ENCODE measurements at regions of chr6 and their contacts with region 1.

Region 1: DNA sequence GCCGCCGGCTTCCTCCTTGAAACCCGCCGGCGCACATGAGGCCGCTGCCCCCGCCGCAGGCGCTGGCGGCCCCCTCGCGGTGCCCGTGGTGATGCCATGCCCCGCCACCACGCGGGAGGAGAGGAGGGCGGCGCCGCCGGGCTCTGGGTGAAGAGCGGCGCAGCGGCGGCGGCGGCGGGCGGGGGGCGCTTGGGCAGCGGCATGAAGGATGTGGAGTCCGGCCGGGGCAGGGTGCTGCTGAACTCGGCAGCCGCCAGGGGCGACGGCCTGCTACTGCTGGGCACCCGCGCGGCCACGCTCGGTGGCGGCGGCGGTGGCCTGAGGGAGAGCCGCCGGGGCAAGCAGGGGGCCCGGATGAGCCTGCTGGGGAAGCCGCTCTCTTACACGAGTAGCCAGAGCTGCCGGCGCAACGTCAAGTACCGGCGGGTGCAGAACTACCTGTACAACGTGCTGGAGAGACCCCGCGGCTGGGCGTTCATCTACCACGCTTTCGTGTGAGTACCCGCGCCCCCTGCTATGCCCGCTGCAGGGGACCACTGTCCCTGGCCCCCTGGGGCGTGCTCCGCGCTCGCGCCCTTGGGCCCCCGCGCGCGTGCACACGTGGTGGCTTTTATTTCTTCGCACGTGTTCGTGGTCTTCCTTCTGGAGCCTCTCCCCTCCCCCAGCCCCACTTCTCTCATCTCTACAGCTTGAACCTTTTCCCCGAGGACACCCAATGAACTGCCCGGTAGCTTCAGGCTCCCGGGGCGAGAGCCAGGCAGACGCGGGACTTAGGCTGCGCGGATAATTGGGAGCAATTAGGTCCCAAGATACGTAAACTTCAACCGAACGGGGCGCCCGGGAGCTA is 453 bp downstream of the KCNQ5 start:
- DNase-seq: peak; percentile 72
- ATAC-seq: peak; percentile 54
- H3K4me3 Mint-ChIP-seq: peak overlapping the region; percentile 96
- H3K27ac Mint-ChIP-seq: peak overlapping the region; percentile 93
- H3K4me1 Mint-ChIP-seq: peaks cover 52% of the 10 kb centered on the region
- H3K27me3 Mint-ChIP-seq: no peaks in the 10 kb centered on the region
- CTCF ChIP-seq: no peak

Region 2: GRCh38 chr6:71288228-71289001 is 1333.9 kb before region 1 on chr6 and contains the start of gene OGFRL1:
- CTCF ChIA-PET with region 1: no interaction called
- POLR2A ChIA-PET with region 1: no interaction called
- intact Hi-C with region 1: loop called (anchors 2 kb)
- DNase-seq: peak; percentile 80
- ATAC-seq: peak; percentile 81
- H3K4me3 Mint-ChIP-seq: peak within 1 kb of the TSS; percentile 85
- H3K27ac Mint-ChIP-seq: peak within 1 kb of the TSS; percentile 93
- H3K4me1 Mint-ChIP-seq: peaks cover 49% of the 10 kb centered on the region
- H3K27me3 Mint-ChIP-seq: no peaks in the 10 kb centered on the region
- CTCF ChIP-seq: no peak
- total RNA-seq, gene OGFRL1: 17.1 and 18.4 TPM in 2 replicates

Region 3: DNA sequence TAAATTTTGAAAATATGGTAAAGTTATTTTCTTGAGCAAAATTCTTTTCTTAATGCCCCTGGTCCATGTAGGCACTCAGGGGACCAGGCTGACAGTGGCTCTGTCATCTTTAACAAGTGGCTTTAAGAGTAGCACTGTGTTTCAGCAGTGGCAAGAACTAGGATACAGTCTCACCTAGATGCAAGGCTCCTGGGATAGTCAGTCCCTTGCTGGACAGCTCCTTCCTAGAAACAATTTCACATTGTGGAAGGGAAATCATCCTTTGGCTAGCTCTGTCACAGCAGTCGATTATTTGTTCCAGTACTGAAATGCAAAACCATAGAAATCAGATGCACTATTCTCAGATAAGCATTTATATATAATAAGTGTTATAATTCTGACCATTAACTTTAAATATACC is 175.9 kb before region 1 on chr6:
- CTCF ChIA-PET with region 1: no interaction called
- POLR2A ChIA-PET with region 1: no interaction called
- intact Hi-C with region 1: no loop called
- DNase-seq: no peak
- ATAC-seq: no peak
- H3K4me3 Mint-ChIP-seq: no peak overlapping the region
- H3K27ac Mint-ChIP-seq: no peak overlapping the region
- H3K4me1 Mint-ChIP-seq: peaks cover 5% of the 10 kb centered on the region
- H3K27me3 Mint-ChIP-seq: peaks cover 22% of the 10 kb centered on the region
- CTCF ChIP-seq: no peak

Region 4: GRCh38 chr6:72665599-72665998 is 43.3 kb after region 1 on chr6:
- CTCF ChIA-PET with region 1: no interaction called
- POLR2A ChIA-PET with region 1: no interaction called
- intact Hi-C with region 1: no loop called
- DNase-seq: no peak
- ATAC-seq: no peak
- H3K4me3 Mint-ChIP-seq: no peak overlapping the region
- H3K27ac Mint-ChIP-seq: no peak overlapping the region
- H3K4me1 Mint-ChIP-seq: peaks cover 7% of the 10 kb centered on the region
- H3K27me3 Mint-ChIP-seq: no peaks in the 10 kb centered on the region
- CTCF ChIP-seq: no peak

Region 5: GRCh38 chr6:72740135-72740534 is 117.8 kb after region 1 on chr6:
- CTCF ChIA-PET with region 1: no interaction called
- POLR2A ChIA-PET with region 1: interaction called, 6 read pairs
- intact Hi-C with region 1: loop called (anchors 2 kb)
- DNase-seq: no peak
- ATAC-seq: peak; percentile 84
- H3K4me3 Mint-ChIP-seq: peak overlapping the region; percentile 11
- H3K27ac Mint-ChIP-seq: peak overlapping the region; percentile 37
- H3K4me1 Mint-ChIP-seq: peaks cover 34% of the 10 kb centered on the region
- H3K27me3 Mint-ChIP-seq: no peaks in the 10 kb centered on the region
- CTCF ChIP-seq: no peak

Region 6: DNA sequence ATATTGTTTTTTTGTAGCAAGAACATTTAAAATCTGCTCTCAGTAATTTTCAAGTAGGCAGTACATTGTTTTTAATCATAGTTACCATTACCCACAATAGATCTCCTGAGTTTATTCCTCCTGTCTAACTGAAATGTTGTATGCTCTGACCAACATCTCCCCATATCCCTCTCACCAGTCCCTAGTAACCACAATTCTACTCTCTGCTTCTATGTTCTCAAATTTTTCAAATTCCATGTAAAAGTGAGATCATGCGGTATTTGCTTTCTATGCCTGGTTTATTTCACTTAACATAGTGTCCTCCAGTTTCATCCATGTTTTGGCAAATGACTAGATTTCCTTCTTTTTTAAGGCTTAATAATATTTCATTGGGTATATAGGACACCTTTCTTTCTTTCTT is 300.1 kb after region 1 on chr6:
- CTCF ChIA-PET with region 1: no interaction called
- POLR2A ChIA-PET with region 1: no interaction called
- intact Hi-C with region 1: loop called (anchors 10 kb)
- DNase-seq: no peak
- ATAC-seq: no peak
- H3K4me3 Mint-ChIP-seq: no peak overlapping the region
- H3K27ac Mint-ChIP-seq: no peak overlapping the region
- H3K4me1 Mint-ChIP-seq: peaks cover 10% of the 10 kb centered on the region
- H3K27me3 Mint-ChIP-seq: no peaks in the 10 kb centered on the region
- CTCF ChIP-seq: no peak

Region 7: GRCh38 chr6:73309769-73310502 is 687.6 kb after region 1 on chr6:
- CTCF ChIA-PET with region 1: no interaction called
- POLR2A ChIA-PET with region 1: no interaction called
- intact Hi-C with region 1: loop called (anchors 2 kb)
- DNase-seq: peak; percentile 59
- ATAC-seq: peak; percentile 94
- H3K4me3 Mint-ChIP-seq: peak overlapping the region; percentile 97
- H3K27ac Mint-ChIP-seq: peak overlapping the region; percentile 87
- H3K4me1 Mint-ChIP-seq: peaks cover 18% of the 10 kb centered on the region
- H3K27me3 Mint-ChIP-seq: peaks cover 8% of the 10 kb centered on the region
- CTCF ChIP-seq: no peak

Region 8: GRCh38 chr6:73520688-73521350 is 898.5 kb after region 1 on chr6 and contains the start of gene EEF1A1:
- CTCF ChIA-PET with region 1: no interaction called
- POLR2A ChIA-PET with region 1: interaction called, 3 read pairs
- intact Hi-C with region 1: loop called (anchors 1 kb)
- DNase-seq: peak; percentile 91
- ATAC-seq: peak; percentile 79
- H3K4me3 Mint-ChIP-seq: peak within 1 kb of the TSS; percentile 96
- H3K27ac Mint-ChIP-seq: peak within 1 kb of the TSS; percentile 98
- H3K4me1 Mint-ChIP-seq: peaks cover 65% of the 10 kb centered on the region
- H3K27me3 Mint-ChIP-seq: no peaks in the 10 kb centered on the region
- CTCF ChIP-seq: no peak
- total RNA-seq, gene EEF1A1: 19,962 and 22,096 TPM in 2 replicates

Measured in activated B cell treated with CpG ODN at 0.5 μM for 24 hours (primary cell).